ENCODE measurements at regions of chr13 and their contacts with region 1.

Region 1: DNA sequence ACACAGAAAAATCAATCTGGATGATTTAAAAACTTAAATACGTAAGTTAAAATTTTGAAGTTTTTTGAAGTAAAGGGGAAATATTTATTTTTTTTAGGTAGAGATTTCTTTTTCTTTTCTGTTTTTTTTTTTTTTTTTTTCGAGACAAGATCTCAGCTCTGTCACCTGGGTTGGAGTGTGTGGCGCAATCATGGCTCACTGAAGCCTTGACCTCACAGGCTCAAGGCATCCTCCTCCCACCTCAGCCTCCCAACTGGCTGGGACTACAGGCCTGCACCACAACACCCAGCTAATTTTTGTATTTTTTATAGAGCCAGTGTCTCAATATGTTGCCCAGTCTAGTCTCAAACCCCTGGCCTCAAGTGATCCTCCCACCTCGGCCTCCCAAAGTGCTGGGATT is 120.4 kb upstream of the CLDN10 start:
- DNase-seq: no peak
- H3K4me3 ChIP-seq: no peak overlapping the region
- H3K27ac ChIP-seq: no peak overlapping the region
- H3K4me1 ChIP-seq: no peaks in the 10 kb centered on the region
- H3K27me3 ChIP-seq: no peaks in the 10 kb centered on the region
- CTCF ChIP-seq: no peak
- EP300 ChIP-seq: no peak
- POLR2A ChIP-seq: no peak
- RAD21 ChIP-seq: no peak

Region 2: GRCh38 chr13:95457294-95457693 is 25.2 kb after region 1 on chr13:
- CTCF ChIA-PET with region 1: no interaction called
- POLR2A ChIA-PET with region 1: no interaction called
- DNase-seq: no peak
- H3K4me3 ChIP-seq: no peak overlapping the region
- H3K27ac ChIP-seq: no peak overlapping the region
- H3K4me1 ChIP-seq: no peaks in the 10 kb centered on the region
- H3K27me3 ChIP-seq: no peaks in the 10 kb centered on the region
- CTCF ChIP-seq: no peak
- EP300 ChIP-seq: no peak
- POLR2A ChIP-seq: no peak
- RAD21 ChIP-seq: no peak

Region 3: DNA sequence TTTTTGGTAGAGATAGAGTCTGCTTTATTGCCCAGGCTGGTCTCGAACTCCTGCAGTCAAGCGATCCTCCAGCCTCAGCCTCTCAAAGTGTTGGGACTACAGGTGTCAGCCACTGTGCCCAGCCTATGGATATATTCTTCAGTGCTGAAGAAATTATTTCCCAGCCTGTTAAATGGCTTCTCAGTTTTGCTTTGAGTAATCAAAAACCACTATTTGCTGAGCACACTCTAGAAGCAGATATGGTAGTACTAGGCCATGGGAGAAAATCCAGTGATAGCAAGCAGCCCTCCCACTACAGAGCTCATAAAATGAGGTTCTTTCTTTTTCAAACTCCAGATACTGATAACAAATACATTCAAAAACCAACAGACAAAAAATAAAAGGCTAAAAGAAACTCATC is 39.8 kb after region 1 on chr13:
- CTCF ChIA-PET with region 1: interaction called, 11 read pairs
- POLR2A ChIA-PET with region 1: no interaction called
- DNase-seq: no peak
- H3K4me3 ChIP-seq: no peak overlapping the region
- H3K27ac ChIP-seq: no peak overlapping the region
- H3K4me1 ChIP-seq: peaks cover 0 to 6% (median 2%) of the 10 kb centered on the region in 4 experiments; a peak in 2 of 7 replicates
- H3K27me3 ChIP-seq: no peaks in the 10 kb centered on the region; a peak in 1 of 7 replicates
- CTCF ChIP-seq: no peak
- EP300 ChIP-seq: no peak
- POLR2A ChIP-seq: no peak
- RAD21 ChIP-seq: no peak

Measured in H1 (cell line).